SK-N-SH (cell line): ENCODE measurements at regions of chr19 and their contacts with region 1.

Region 1: GRCh38 chr19:41753936-41754529 is 1.3 kb upstream of the CEACAM6 start:
- DNase-seq: peak; percentile 49
- H3K4me3 ChIP-seq: peak overlapping the region in 1 of 2 experiments; percentile 12; a peak in 1 of 4 replicates
- H3K27ac ChIP-seq: no peak overlapping the region
- H3K4me1 ChIP-seq: no peaks in the 10 kb centered on the region
- H3K27me3 ChIP-seq: peaks cover 17% of the 10 kb centered on the region; the same call in 1 of the 2 replicates
- CTCF ChIP-seq: peak; percentile 76
- EP300 ChIP-seq: no peak
- RAD21 ChIP-seq: 0 out of 2 replicates have a peak, but pooled peaks have one; percentile 15

Region 2: DNA sequence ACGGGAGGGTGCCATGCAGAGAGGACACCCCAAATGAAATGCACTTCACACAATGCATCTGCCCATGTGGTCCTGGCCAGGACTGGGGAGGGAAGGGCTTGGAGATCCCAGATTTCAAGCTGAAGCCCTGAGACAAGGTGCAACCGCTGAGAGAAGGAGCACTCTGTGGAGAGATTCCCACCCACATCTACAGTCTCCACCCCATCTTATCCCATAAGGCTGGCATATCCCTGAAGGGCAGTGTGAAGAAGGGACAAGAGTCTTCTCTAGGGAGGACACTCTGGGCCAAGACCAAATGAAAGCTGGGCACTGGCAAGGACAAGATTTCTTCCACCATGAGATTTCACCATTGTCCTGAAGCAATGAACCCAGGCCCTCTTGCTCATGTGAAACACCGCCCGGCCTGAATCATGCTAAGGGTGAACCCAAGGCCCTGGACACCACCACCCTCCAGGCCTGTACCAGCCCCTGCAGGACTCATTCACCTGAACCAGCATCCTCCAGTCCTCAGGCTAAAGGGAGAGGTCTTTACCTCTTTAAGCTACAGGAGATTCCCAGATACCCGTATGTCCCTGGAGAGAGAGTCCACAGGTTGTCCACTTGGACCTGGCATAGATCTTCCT is 147.7 kb before region 1 on chr19:
- CTCF ChIA-PET with region 1: no interaction called
- POLR2A ChIA-PET with region 1: no interaction called
- DNase-seq: no peak
- H3K4me3 ChIP-seq: no peak overlapping the region
- H3K27ac ChIP-seq: no peak overlapping the region
- H3K4me1 ChIP-seq: no peaks in the 10 kb centered on the region
- H3K27me3 ChIP-seq: peaks cover 20% of the 10 kb centered on the region; the same call in 1 of the 2 replicates
- CTCF ChIP-seq: no peak
- EP300 ChIP-seq: no peak
- RAD21 ChIP-seq: no peak

Region 3: DNA sequence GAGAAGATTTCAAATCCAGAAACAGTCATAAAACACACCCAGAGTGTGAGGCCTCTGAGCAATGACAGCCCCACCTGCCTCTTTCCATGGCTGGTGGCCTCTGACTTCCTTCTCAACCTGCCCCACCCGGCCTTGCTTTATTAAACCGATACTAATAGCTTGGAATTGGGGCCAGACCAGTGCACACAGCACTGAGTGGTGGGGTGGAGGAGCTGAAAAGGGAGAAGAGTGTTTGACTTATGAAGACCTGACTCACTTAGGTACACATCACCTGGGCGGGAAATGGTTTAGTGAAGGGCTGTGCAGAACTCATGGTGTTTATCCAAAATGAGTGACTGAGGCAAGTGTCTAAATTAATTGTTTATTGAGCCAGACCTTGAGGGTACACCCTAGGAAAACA is 19.4 kb before region 1 on chr19:
- CTCF ChIA-PET with region 1: interaction called, 15 read pairs
- POLR2A ChIA-PET with region 1: no interaction called
- DNase-seq: no peak
- H3K4me3 ChIP-seq: no peak overlapping the region
- H3K27ac ChIP-seq: no peak overlapping the region
- H3K4me1 ChIP-seq: no peaks in the 10 kb centered on the region
- H3K27me3 ChIP-seq: peaks cover 39% of the 10 kb centered on the region
- CTCF ChIP-seq: no peak
- EP300 ChIP-seq: no peak
- RAD21 ChIP-seq: no peak

Region 4: GRCh38 chr19:41785653-41786052 is 31.6 kb after region 1 on chr19:
- CTCF ChIA-PET with region 1: interaction called, 21 read pairs
- POLR2A ChIA-PET with region 1: no interaction called
- DNase-seq: peak; percentile 76
- H3K4me3 ChIP-seq: no peak overlapping the region; a peak in 1 of 4 replicates
- H3K27ac ChIP-seq: no peak overlapping the region
- H3K4me1 ChIP-seq: no peaks in the 10 kb centered on the region
- H3K27me3 ChIP-seq: peaks cover 59% of the 10 kb centered on the region
- CTCF ChIP-seq: peak; percentile 87
- EP300 ChIP-seq: no peak
- RAD21 ChIP-seq: peak; percentile 52

Region 5: DNA sequence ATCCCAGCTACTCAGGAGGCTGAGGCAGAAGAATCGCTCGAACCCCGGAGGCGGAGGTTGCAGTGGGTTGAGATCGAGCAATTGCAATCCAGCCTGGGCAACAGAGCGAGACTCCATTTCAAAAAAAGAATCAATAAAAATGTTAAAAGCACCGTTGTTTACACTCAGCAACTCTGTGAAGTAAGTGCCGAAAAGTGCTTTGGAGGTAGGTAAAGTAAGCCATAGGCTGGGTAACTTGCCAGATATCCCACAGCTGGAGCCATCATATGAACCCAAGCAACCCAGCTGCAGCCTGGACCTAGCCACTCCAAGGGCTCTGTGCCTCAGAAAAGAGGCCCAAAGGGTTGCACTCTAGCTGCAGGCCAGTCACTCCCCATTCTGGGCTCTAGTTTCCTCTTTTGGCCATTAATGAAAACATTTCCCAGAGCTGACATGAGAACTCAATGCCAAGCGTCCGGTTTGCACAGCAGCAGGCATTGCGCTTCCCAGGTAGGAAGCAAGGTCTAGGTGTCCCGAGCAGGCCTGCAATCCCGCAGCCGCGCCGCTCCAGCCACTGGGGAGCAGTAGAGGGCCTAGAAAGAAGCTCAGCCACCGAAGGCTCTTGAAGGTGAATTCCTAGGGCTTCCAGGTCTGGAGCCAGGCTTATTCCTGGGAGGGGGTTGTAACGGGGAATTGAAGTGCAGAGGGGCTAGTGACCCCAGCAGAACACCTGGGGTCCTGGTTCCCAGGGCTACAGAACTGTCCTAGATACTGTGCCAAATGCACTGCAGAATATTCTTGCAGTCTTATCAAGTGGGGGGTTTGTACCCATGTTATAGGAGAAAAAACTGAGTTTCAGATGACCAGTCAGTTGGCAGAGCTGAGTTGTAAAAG is 119.0 kb after region 1 on chr19:
- CTCF ChIA-PET with region 1: no interaction called
- POLR2A ChIA-PET with region 1: no interaction called
- DNase-seq: peak; percentile 72
- H3K4me3 ChIP-seq: no peak overlapping the region; a peak in 1 of 4 replicates
- H3K27ac ChIP-seq: peak overlapping the region in 1 of 2 experiments; percentile 0; a peak in 1 of 4 replicates
- H3K4me1 ChIP-seq: no peaks in the 10 kb centered on the region; a peak in 1 of 4 replicates
- H3K27me3 ChIP-seq: no peaks in the 10 kb centered on the region
- CTCF ChIP-seq: peak; percentile 68
- EP300 ChIP-seq: no peak
- RAD21 ChIP-seq: peak; percentile 79